A673 (cell line): ENCODE measurements at regions of chr3 and their contacts with region 1.

Region 1: DNA sequence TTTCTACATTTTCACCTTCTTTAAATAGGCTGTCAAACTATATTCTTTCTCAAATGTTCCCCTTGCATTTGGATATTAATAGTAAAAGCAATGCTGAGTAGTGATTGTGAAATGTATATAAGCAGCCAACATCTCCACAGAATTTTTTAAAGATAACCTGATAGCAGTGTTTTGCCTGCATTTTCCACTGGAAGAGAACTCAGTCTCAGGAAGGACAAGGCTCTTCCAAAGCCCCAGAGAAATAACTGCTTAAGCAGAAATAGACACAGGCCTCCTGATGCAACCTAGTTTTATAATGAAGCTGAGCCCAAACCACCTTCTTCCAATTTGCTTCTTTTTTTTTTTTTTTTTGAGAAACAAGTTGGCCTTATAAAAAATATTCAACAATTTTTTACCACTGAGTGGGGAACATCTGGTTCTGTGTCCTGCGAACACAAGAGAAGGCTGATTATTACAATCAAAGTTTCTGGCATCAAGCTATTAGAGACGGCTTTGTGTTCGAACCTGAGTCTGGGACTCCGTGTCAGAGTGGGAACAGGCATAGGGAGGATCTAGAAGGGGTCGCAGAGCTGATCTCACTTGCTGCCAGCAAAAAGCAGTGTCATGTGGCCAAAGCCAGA is 332.5 kb upstream of the TBL1XR1 start:
- DNase-seq: no peak
- H3K4me3 ChIP-seq: no peak overlapping the region
- H3K27ac ChIP-seq: no peak overlapping the region
- H3K4me1 ChIP-seq: peaks cover 4% of the 10 kb centered on the region
- H3K27me3 ChIP-seq: no peaks in the 10 kb centered on the region
- CTCF ChIP-seq: no peak

Region 2: GRCh38 chr3:176149567-176149966 is 1380.3 kb before region 1 on chr3:
- CTCF ChIA-PET with region 1: no interaction called
- POLR2A ChIA-PET with region 1: interaction called, 13 read pairs
- intact Hi-C with region 1: no loop called
- DNase-seq: no peak
- H3K4me3 ChIP-seq: no peak overlapping the region
- H3K27ac ChIP-seq: no peak overlapping the region
- H3K4me1 ChIP-seq: no peaks in the 10 kb centered on the region
- H3K27me3 ChIP-seq: no peaks in the 10 kb centered on the region
- CTCF ChIP-seq: no peak

Region 3: GRCh38 chr3:176663837-176664831 is 865.7 kb before region 1 on chr3:
- CTCF ChIA-PET with region 1: no interaction called
- POLR2A ChIA-PET with region 1: no interaction called
- intact Hi-C with region 1: no loop called
- DNase-seq: peak; percentile 79
- H3K4me3 ChIP-seq: no peak overlapping the region
- H3K27ac ChIP-seq: peak overlapping the region; percentile 35
- H3K4me1 ChIP-seq: peaks cover 17% of the 10 kb centered on the region
- H3K27me3 ChIP-seq: no peaks in the 10 kb centered on the region
- CTCF ChIP-seq: peak; percentile 67